PC-9 (cell line): ENCODE measurements at regions of chr6 and their contacts with region 1.

Region 1: DNA sequence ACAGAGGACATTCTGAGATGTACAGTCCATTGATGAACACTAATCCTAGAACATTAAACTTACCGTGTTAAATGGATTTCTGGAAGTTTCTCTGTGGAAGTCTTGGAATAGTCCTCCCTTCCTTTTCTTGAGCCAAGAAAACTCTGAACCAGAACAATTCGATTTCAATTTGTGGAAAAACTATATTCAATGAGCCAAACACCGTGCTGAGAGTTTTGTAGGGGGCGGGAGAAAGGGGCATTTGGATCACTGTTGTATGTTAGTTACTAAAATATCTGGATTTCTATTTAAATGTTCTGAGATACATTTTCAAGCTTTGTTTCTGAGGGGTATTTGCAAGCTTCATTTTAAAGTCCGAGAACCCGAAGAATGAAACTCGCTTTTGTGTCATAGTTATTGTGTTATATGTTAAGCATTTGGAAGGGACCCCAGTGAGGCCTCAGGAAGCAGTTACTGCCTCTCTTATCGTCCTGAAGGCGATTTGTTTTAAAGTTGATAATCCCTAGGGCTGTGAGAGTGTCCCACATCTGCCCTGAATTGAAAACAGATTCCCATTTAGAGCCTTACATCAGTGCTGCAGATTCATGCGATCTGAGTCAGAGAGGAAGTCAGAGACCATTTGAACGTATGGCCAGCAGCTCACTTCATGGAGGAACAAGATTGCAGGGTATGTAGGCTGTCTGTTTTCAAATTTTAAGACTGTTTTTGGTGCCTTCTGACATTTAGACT is 70.8 kb upstream of the SASH1 start:
- DNase-seq: no peak
- H3K4me3 ChIP-seq: no peak overlapping the region
- H3K27ac ChIP-seq: no peak overlapping the region
- H3K4me1 ChIP-seq: peaks cover 22% of the 10 kb centered on the region
- H3K27me3 ChIP-seq: no peaks in the 10 kb centered on the region
- CTCF ChIP-seq: no peak

Region 2: DNA sequence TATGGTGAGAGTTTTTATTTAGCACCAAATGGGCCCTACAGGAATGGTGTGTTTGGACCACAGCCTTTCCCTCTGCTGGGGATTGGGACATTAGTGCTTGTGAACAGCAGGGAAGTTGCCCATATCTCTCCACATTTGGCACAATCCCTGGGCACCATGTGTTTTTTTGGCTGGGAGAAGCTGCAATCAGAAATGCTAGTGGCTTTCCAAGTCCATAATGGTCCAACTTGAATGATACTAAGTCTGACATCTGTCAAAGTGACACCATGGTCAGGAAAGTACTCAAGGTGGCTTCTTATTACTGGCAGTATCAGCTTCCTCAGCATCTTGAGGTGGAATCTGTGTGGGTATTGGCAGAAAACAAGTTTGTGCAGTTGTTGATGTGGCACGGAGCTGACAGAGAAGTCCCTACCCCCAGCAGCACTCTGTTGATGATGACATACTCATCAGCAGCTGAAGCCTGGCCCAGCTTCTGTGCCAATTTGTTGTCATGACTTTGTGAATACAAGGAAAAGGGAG is 123.8 kb after region 1 on chr6:
- CTCF ChIA-PET with region 1: interaction called, 19 read pairs
- POLR2A ChIA-PET with region 1: no interaction called
- intact Hi-C with region 1: loop called (anchors 10 kb)
- DNase-seq: no peak
- H3K4me3 ChIP-seq: no peak overlapping the region
- H3K27ac ChIP-seq: no peak overlapping the region
- H3K4me1 ChIP-seq: 0 out of 2 replicates have a peak, but pooled peaks cover 7% of the 10 kb centered on the region
- H3K27me3 ChIP-seq: no peaks in the 10 kb centered on the region
- CTCF ChIP-seq: no peak